Gastrocnemius medialis (tissue), 4 donors: ENCODE measurements at regions of chr7 and their contacts with region 1.

Region 1: DNA sequence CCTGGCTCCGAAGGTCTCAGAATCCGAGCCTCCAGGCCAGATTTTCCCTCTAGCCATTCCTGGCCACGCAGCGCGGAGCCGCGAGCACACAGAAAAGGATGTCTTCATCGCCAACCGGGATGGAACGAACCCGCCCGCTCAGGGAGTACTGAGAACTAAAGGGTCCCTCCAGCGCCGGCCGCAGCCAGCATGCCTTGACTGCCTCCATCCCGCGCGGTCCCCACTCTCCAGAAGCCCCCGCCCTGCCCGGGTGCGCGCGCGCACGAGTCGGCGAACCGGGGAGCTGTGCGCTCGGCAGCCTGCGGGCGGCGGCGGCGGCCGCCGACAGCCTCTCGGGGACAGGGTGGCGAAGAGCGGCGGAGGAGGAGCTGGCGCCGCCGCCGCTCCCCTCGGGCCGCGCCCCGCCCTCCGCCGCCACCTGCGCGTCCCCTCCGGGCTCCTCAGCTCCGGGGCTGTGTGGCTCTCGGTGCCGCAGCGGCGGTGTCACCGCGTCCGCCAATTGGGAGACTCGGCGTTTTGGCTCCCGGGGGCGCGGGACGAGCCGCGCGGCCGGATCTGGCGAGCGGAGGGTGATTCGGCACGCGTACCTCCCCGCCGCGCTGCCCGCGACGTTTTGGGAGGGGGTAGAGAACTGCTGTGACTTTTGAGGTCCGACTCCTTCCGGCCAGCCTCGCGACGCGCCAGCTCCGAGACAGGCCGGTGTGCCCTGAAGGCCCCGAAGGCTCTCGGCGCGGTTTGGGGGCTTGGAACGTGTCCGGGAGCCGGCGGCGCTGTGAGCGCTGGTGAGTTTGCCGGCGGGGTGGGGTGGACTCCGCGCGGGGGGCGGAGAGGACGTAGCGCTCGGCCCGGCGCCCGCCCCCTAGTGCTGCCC is 453 bp upstream of the GALNT17 start:
- DNase-seq: no peak
- ATAC-seq: peak; percentile 52 to 56
- H3K4me3 ChIP-seq: peak overlapping the region; percentile 42 to 68 (median 54)
- H3K27ac ChIP-seq: peak overlapping the region in 2 of 4 donors; percentile 45 to 64
- H3K4me1 ChIP-seq: no peaks in the 10 kb centered on the region
- H3K27me3 ChIP-seq: peaks cover 0 to 20% (median 0%) of the 10 kb centered on the region in 3 donors
- CTCF ChIP-seq: peak in 2 of 5 experiments; percentile 10 to 33
- POLR2A ChIP-seq: peak; percentile 31 to 36

Region 2: DNA sequence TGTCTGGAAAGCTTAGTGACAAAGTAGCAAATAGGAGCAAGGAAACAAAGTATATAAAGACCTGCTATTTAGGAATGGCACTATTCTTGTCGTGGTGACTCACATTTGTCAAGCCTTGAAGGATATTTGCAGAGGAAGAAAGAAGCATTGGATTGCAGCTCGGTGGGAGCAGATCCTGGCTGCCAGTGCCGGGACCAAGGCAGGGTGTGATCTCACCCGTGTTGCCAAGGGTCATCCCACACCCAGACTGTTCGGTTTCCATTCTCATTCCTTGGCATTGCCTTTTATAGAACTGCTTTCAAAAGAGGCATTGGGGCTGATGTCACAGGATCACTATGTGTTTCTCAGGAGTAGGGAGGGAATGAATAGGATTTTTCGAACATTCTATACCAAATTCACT is 176.6 kb after region 1 on chr7:
- in situ Hi-C with region 1: no loop called
- intact Hi-C with region 1: loop called (anchors 10 kb)
- DNase-seq: peak; percentile 25 to 58
- ATAC-seq: peak; percentile 83 to 93
- H3K4me3 ChIP-seq: no peak overlapping the region
- H3K27ac ChIP-seq: peak overlapping the region in 2 of 4 donors; percentile 54 to 65
- H3K4me1 ChIP-seq: peaks cover 12 to 13% of the 10 kb centered on the region in 2 donors
- H3K27me3 ChIP-seq: no peaks in the 10 kb centered on the region
- CTCF ChIP-seq: no peak
- POLR2A ChIP-seq: no peak

Region 3: GRCh38 chr7:71612911-71613310 is 481.4 kb after region 1 on chr7:
- in situ Hi-C with region 1: no loop called
- intact Hi-C with region 1: loop called (anchors 10 kb)
- DNase-seq: no peak
- ATAC-seq: no peak
- H3K4me3 ChIP-seq: no peak overlapping the region
- H3K27ac ChIP-seq: peak overlapping the region in 2 of 4 donors; percentile 26 to 70
- H3K4me1 ChIP-seq: peaks cover 28 to 30% of the 10 kb centered on the region in 2 donors
- H3K27me3 ChIP-seq: no peaks in the 10 kb centered on the region
- CTCF ChIP-seq: no peak
- POLR2A ChIP-seq: no peak

Region 4: GRCh38 chr7:71733107-71733870 is 601.8 kb after region 1 on chr7:
- in situ Hi-C with region 1: no loop called
- intact Hi-C with region 1: loop called (anchors 2 kb)
- DNase-seq: peak; percentile 34 to 50
- ATAC-seq: peak; percentile 55 to 60
- H3K4me3 ChIP-seq: no peak overlapping the region
- H3K27ac ChIP-seq: no peak overlapping the region
- H3K4me1 ChIP-seq: peaks cover 0 to 3% of the 10 kb centered on the region in 2 donors
- H3K27me3 ChIP-seq: no peaks in the 10 kb centered on the region
- CTCF ChIP-seq: peak; percentile 58 to 89 (median 87)
- POLR2A ChIP-seq: no peak